Mammary epithelial cell (primary cell): ENCODE measurements at regions of chr13 and their contacts with region 1.

Region 1: DNA sequence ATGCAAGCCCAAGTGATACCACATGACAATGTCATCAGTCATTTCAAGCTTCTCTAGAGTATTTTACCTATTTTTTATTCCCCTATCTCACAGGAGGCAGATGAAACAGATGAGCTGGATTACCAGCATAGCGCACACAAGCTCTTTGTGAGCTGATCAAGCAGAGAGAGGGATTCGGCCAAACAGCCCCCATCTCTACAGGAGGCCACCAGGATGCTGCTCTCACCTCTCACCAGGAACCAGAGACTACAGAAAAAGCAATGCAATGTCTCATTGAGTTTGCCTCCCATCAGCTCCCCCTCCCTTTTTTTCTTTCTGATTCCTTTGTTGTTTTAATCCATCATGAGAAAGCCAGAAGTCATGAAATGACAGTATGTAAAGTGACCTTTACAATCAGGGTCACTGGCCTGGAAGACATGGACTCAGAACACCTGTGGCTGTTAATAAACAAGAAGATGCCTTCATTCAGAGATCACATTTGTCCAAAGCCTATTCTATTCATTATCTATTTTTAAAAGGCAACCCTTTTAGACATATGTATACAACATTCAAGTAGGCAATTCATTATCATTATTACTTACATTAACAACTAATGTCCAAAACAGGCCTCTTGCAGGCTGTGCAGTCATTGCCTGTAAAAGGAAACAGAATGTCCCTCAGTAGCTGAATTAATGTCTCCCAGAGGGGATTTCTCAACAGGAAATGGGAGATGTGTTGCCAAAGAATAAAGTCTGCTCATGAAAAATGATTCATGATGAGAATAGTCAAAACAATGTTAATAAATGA is 656.6 kb downstream of the TBC1D4 start:
- DNase-seq: peak; percentile 86
- H3K4me3 ChIP-seq: no peak overlapping the region
- H3K27ac ChIP-seq: peak overlapping the region; percentile 15
- H3K4me1 ChIP-seq: peaks cover 11% of the 10 kb centered on the region
- H3K27me3 ChIP-seq: no peaks in the 10 kb centered on the region
- CTCF ChIP-seq: no peak

Region 2: DNA sequence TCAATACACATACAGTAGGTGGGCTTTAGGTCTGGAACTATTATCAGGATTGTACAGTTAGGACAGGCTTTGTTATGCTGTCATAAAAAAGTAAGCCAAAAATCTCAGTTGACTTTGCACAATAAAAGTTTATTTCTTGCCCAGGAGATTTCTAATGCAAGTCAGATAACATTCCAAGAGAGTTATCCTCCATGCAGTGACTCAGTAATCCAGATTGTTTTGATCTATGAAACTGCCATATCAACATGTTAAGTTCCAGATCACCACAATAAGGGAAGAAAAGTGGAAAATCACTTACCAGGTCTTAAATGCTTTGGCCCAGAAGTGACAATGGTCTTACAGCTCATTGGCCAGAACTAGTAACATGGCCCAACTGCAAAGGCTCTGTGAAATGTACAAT is 55.0 kb before region 1 on chr13:
- CTCF ChIA-PET with region 1: interaction called, 3 read pairs
- dilution Hi-C with region 1: no loop called
- in situ Hi-C with region 1: no loop called
- intact Hi-C with region 1: loop called (anchors 5 kb)
- DNase-seq: peak; percentile 81
- H3K4me3 ChIP-seq: no peak overlapping the region
- H3K27ac ChIP-seq: peak overlapping the region; percentile 58
- H3K4me1 ChIP-seq: peaks cover 20% of the 10 kb centered on the region
- H3K27me3 ChIP-seq: no peaks in the 10 kb centered on the region
- CTCF ChIP-seq: no peak

Region 3: GRCh38 chr13:74860789-74861188 is 35.4 kb after region 1 on chr13:
- CTCF ChIA-PET with region 1: no interaction called
- dilution Hi-C with region 1: loop called (anchors 5 kb)
- in situ Hi-C with region 1: no loop called
- intact Hi-C with region 1: no loop called
- DNase-seq: no peak
- H3K4me3 ChIP-seq: no peak overlapping the region
- H3K27ac ChIP-seq: no peak overlapping the region
- H3K4me1 ChIP-seq: no peaks in the 10 kb centered on the region
- H3K27me3 ChIP-seq: peaks cover 2% of the 10 kb centered on the region
- CTCF ChIP-seq: no peak

Region 4: GRCh38 chr13:74868049-74868448 is 42.7 kb after region 1 on chr13:
- CTCF ChIA-PET with region 1: no interaction called
- dilution Hi-C with region 1: loop called (anchors 5 kb)
- in situ Hi-C with region 1: no loop called
- intact Hi-C with region 1: loop called (anchors 1 kb)
- DNase-seq: peak; percentile 56
- H3K4me3 ChIP-seq: peak overlapping the region in 1 of 3 experiments; percentile 15
- H3K27ac ChIP-seq: no peak overlapping the region
- H3K4me1 ChIP-seq: peaks cover 25% of the 10 kb centered on the region
- H3K27me3 ChIP-seq: peaks cover 2% of the 10 kb centered on the region
- CTCF ChIP-seq: no peak